Adrenal gland (tissue), 19 donors: ENCODE measurements at regions of chr1 and their contacts with region 1.

Region 1: DNA sequence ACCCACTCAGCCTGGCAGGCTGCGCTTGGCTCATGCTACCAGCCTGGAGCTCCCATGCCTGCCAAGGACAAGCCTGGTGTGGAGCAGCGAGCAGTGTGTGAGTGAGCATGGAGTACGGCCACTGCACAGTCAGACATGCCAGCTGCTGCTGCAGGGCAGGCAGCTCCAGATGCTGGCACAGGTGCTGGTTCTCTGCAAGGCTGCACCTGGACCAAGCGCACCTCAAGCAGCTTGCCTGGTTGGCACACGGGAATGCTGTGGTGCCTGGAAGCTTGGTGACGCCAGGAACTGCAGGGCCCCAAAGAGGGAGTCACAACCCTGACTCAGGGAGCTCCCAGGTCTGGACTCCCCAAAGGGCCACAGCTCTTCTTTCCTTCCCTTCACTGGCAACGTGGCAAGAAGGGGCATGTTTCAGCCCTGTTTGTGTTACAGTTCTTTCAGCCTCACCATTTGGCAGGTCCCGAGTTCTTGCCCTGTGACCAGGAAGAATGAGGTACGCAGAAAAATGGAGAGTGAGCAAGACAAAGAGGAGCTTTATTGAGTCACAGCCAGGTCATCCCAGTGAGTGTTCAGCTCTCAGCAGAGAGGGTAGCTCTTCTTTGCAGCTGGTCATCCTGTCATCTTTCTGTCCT is 26.1 kb downstream of the ACOT7 start:
- DNase-seq: peak in 6 of 7 donors; percentile 66 to 83 (median 78)
- H3K4me3 ChIP-seq: no peak overlapping the region
- H3K27ac ChIP-seq: no peak overlapping the region
- H3K4me1 ChIP-seq: peaks cover 0 to 4% of the 10 kb centered on the region in 2 donors
- H3K27me3 ChIP-seq: no peaks in the 10 kb centered on the region
- CTCF ChIP-seq: no peak
- POLR2A ChIP-seq: no peak

Region 2: GRCh38 chr1:6401673-6402072 is 34.2 kb after region 1 on chr1:
- intact Hi-C with region 1: loop called (anchors 5 kb)
- DNase-seq: no peak
- H3K4me3 ChIP-seq: no peak overlapping the region
- H3K27ac ChIP-seq: no peak overlapping the region
- H3K4me1 ChIP-seq: peaks cover 6 to 8% of the 10 kb centered on the region in 2 donors
- H3K27me3 ChIP-seq: no peaks in the 10 kb centered on the region
- CTCF ChIP-seq: no peak
- POLR2A ChIP-seq: no peak

Region 3: GRCh38 chr1:6497183-6497897 is 129.8 kb after region 1 on chr1:
- intact Hi-C with region 1: no loop called
- DNase-seq: peak; percentile 73 to 83 (median 76)
- H3K4me3 ChIP-seq: peak overlapping the region in 3 of 4 donors; percentile 56 to 89 (median 59)
- H3K27ac ChIP-seq: peak overlapping the region in 4 of 5 donors; percentile 46 to 78 (median 73)
- H3K4me1 ChIP-seq: peaks cover 30 to 57% of the 10 kb centered on the region in 2 donors
- H3K27me3 ChIP-seq: no peaks in the 10 kb centered on the region
- CTCF ChIP-seq: no peak
- POLR2A ChIP-seq: no peak